ENCODE measurements at regions of chr22 and their contacts with region 1.

Region 1: GRCh38 chr22:42114721-42115120 is 15.9 kb downstream of the CYP2D6 start:
- DNase-seq: no peak
- ATAC-seq: no peak
- H3K4me3 ChIP-seq: no peak overlapping the region
- H3K27ac ChIP-seq: no peak overlapping the region
- H3K4me1 ChIP-seq: no peaks in the 10 kb centered on the region
- H3K27me3 ChIP-seq: no peaks in the 10 kb centered on the region
- CTCF ChIP-seq: no peak

Region 2: DNA sequence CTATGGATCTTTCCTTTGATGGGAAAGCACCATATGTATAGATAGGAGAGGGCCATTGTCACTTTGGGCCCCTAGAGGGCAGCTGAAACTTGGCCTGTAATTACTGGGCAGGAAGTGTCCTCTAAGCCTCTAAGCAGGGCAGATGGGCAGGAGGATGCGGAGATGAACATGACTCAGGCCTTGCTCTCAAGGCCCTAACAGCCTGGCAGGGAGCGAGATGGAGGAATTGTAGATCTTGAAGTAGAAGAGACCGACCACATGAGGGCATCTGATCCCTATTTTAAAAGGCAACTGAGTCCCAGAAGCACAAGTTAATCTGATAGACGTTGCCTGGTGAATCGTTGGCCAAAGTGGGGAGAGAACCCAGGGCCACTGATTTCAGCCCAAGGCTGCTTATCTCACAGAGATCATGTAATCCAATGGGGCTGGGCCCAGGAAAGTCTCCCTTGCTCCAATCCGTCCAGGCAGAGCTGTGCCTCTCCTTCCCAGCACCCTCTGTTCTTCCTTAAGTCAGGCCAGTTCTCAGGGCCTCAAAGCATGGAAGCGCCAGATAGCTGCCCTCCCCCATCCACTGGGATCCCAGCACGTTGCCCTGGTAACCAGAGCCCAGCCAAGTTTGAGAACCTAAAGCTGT is 148.0 kb before region 1 on chr22:
- intact Hi-C with region 1: loop called in 1 of 2 experiments (anchors 10 kb)
- DNase-seq: peak in 1 of 4 donors; percentile 55
- ATAC-seq: peak; percentile 55
- H3K4me3 ChIP-seq: no peak overlapping the region
- H3K27ac ChIP-seq: no peak overlapping the region
- H3K4me1 ChIP-seq: peaks cover 0 to 5% of the 10 kb centered on the region in 2 donors
- H3K27me3 ChIP-seq: peaks cover 0 to 12% of the 10 kb centered on the region in 2 donors
- CTCF ChIP-seq: peak in 1 of 2 donors; percentile 35

Measured in left lung (tissue), 14 donors.